Activated CD4-positive, alpha-beta memory T cell treated with anti-CD3 and anti-CD28 coated beads for 36 hours (primary cell): ENCODE measurements at regions of chr10 and their contacts with region 1.

Region 1: GRCh38 chr10:22714479-22715289 is at the start of gene PIP4K2A:
- DNase-seq: peak; percentile 82
- H3K4me3 Mint-ChIP-seq: peak within 1 kb of the TSS; percentile 89
- H3K27ac Mint-ChIP-seq: peak within 1 kb of the TSS; percentile 91
- H3K4me1 Mint-ChIP-seq: peaks cover 28% of the 10 kb centered on the region
- H3K27me3 Mint-ChIP-seq: no peaks in the 10 kb centered on the region
- total RNA-seq, gene PIP4K2A: 107 to 108 TPM

Region 2: DNA sequence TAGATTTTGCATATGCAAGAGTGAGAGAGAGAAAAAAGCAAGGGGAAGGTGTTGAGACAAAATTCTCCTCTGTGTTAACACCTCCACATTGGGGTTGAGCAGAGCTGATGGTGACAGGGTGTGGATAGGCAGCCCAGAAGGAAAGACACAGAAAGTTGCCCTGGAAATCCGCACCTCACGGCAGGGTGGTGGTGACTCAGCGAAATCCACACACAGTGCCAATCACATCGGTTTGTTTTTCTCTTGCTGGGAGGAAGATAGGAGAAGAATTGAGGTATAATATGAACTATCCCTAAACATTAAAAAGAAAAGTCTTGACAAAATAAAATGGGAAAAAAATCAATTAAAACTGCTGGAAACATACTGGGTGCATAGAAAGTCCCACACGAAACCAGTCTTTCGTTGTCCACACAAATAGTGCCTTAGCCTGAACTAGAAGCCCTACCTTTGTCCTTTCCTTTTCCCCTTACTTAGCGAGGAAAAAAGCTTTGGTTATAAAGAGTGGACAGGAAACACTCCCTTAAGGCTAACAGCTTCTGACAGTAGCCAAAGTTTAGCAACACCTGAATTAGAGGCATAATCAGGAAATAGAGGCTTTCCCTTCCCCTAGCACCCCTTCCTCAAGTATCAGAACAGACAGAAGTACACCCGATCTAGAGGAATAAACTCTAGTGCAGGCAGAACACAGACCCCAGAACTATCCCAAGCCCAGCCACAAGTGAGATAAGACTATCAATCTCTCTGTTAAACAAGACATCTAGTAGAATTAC is 671.9 kb before region 1 on chr10:
- CTCF ChIA-PET with region 1: no interaction called
- POLR2A ChIA-PET with region 1: no interaction called
- intact Hi-C with region 1: no loop called
- DNase-seq: no peak
- H3K4me3 Mint-ChIP-seq: no peak overlapping the region
- H3K27ac Mint-ChIP-seq: no peak overlapping the region
- H3K4me1 Mint-ChIP-seq: no peaks in the 10 kb centered on the region
- H3K27me3 Mint-ChIP-seq: peaks cover 21% of the 10 kb centered on the region

Region 3: GRCh38 chr10:22436884-22437619 is 277.6 kb before region 1 on chr10:
- CTCF ChIA-PET with region 1: no interaction called
- POLR2A ChIA-PET with region 1: no interaction called
- intact Hi-C with region 1: loop called (anchors 10 kb)
- DNase-seq: peak; percentile 89
- H3K4me3 Mint-ChIP-seq: peak overlapping the region; percentile 88
- H3K27ac Mint-ChIP-seq: peak overlapping the region; percentile 91
- H3K4me1 Mint-ChIP-seq: peaks cover 50% of the 10 kb centered on the region
- H3K27me3 Mint-ChIP-seq: no peaks in the 10 kb centered on the region

Region 4: DNA sequence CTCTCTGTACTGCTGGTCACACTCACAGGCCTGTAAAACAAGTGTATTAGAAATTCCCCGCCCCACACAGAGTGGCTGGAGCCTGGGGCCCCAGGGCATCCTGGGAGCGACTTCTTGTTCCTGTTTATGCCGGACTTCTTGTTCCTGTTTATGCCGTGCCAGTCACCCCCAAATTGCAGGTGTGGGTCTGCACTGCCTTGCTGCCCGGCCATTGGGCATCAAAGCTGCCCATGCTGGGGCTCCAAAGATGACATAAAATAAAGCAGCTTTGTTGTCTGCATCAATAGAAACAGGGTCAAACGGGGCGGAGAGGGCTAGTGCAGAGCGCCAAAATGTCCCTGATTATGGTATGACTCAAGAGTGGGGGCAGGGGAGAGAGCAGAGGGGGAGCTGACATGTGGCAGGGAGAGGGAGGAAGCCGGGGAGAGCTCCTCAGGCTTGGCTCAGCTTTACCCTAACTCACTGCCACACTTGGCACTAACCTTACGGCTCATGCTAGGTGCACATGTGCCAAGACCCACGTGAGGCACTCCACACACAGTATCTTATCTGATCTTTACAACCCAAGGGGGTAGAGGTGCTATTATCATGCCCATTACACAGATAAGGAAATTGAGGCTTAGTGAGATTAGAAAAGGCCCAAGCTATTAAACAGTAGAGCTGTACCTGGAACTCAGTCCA is 98.7 kb before region 1 on chr10:
- CTCF ChIA-PET with region 1: interaction called, 3 read pairs
- POLR2A ChIA-PET with region 1: interaction called, 3 read pairs
- intact Hi-C with region 1: loop called (anchors 2 kb)
- DNase-seq: peak; percentile 57
- H3K4me3 Mint-ChIP-seq: peak overlapping the region; percentile 79
- H3K27ac Mint-ChIP-seq: peak overlapping the region; percentile 86
- H3K4me1 Mint-ChIP-seq: peaks cover 97% of the 10 kb centered on the region
- H3K27me3 Mint-ChIP-seq: no peaks in the 10 kb centered on the region

Region 5: DNA sequence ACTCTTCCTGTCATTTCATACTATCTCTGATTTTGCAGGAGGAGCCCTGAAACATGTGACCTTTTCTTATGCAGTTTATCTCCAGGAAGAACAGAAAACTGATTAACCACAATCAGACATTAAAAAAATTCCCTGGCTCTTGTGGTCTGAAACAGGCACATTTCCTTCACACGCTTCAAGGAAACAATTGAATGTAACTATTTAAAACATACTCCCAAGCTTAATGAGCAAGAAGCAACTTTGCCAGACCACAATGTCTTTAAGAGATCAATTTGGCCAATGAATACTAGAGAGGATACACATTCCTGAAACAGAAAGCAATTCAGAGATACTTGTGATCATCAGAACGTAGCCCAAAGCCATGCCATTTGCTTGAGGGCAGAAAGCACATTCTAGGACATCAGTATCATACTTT is 66.1 kb before region 1 on chr10:
- CTCF ChIA-PET with region 1: interaction called, 8 read pairs
- POLR2A ChIA-PET with region 1: interaction called, 15 read pairs
- intact Hi-C with region 1: loop called (anchors 2 kb)
- DNase-seq: no peak
- H3K4me3 Mint-ChIP-seq: peak overlapping the region; percentile 74
- H3K27ac Mint-ChIP-seq: peak overlapping the region; percentile 95
- H3K4me1 Mint-ChIP-seq: peaks cover 93% of the 10 kb centered on the region
- H3K27me3 Mint-ChIP-seq: no peaks in the 10 kb centered on the region

Region 6: DNA sequence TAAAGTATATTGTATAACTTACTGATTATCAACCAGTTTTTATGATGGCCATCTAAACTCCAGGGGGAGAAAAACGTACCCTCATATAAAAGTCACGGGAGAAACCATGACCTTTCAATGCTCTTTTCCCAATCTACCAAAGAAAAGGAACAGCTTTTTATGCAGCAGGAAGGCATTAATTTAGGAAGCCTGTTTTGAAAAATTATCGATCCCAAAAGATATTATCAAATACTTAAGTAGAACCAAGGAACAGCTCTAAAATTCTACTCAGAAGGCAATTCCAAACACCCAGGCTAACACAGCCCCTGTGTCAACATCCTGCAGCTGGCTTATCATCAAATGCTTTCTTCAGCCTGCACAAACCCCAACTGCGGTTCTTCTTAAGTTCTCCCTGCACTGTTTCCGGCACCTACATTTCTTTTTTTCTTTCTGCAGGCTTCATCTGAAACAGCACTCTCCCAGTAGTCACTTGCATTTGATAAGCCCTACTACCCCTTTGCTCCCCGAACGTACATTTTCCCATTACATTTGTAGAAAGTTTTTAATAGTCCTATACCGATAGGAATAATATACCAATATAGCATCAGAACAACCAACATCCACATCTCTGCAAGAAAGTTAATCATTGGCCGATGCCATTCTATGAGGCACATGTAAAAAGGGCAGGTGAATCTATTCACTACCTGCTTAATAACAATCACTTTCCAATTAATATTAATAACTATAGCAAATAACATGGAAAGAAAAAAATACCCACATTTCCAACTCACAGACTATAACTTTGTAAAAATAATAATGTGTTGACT is 48.2 kb before region 1 on chr10:
- CTCF ChIA-PET with region 1: interaction called, 3 read pairs
- POLR2A ChIA-PET with region 1: interaction called, 3 read pairs
- intact Hi-C with region 1: loop called (anchors 1 kb)
- DNase-seq: peak; percentile 71
- H3K4me3 Mint-ChIP-seq: peak overlapping the region; percentile 72
- H3K27ac Mint-ChIP-seq: peak overlapping the region; percentile 84
- H3K4me1 Mint-ChIP-seq: peaks cover 75% of the 10 kb centered on the region
- H3K27me3 Mint-ChIP-seq: no peaks in the 10 kb centered on the region